Astrocyte of the cerebellum (primary cell): ENCODE measurements at regions of chr11 and their contacts with region 1.

Region 1: GRCh38 chr11:2666401-2666741 is 33.4 kb downstream of the KCNQ1OT1 start:
- DNase-seq: no peak
- H3K4me3 ChIP-seq: no peak overlapping the region
- CTCF ChIP-seq: no peak

Region 2: DNA sequence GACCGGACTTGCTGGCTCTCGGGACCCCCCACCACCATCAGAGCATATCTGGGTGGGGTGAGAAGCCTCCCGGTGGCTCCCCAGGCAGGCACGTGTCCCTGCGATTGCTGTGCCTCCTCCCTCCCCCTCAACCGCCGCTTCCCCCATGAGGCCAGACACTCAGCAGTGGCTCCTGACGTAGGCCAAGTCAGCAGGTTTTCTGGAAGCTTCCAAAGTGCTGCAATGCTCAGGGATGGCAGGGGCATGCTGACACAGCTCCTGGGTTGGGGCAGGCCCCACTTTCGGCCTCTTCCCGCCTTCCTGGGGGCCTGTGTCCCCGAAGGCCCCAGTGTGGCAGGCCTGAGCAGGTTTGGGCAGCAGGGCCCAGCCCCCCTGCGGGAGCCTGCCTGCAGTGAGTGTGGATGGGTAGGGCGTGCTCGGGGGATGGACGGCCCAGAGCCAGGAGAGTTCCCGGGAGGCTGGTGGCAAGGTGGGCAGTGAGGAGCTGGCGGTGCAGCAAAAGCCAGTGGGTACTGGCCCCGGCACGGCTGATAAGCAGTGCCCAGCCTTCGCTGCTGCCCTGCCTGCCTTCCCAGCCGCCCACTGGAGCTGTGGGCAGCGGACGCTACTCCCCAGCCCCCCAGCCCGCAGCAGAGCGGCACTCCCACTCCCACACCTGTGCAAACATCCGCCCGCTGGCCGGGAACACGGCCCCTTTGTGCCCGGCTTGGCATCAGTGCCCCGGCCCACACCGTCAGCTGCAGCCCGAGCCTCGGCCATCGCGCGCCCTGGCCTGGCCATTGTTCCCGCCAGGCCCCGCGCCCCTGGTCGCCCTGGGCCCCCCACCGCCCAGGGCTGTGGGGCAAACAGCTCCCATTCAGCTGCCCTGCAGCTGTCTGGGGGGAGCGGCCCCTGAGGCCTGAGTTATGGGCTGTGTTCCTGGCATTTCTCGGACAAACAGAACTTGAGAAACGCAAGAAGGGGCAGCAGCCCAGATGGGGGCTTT is 91.5 kb before region 1 on chr11:
- in situ Hi-C with region 1: loop called (anchors 5 kb)
- DNase-seq: no peak
- H3K4me3 ChIP-seq: no peak overlapping the region
- CTCF ChIP-seq: no peak

Region 3: DNA sequence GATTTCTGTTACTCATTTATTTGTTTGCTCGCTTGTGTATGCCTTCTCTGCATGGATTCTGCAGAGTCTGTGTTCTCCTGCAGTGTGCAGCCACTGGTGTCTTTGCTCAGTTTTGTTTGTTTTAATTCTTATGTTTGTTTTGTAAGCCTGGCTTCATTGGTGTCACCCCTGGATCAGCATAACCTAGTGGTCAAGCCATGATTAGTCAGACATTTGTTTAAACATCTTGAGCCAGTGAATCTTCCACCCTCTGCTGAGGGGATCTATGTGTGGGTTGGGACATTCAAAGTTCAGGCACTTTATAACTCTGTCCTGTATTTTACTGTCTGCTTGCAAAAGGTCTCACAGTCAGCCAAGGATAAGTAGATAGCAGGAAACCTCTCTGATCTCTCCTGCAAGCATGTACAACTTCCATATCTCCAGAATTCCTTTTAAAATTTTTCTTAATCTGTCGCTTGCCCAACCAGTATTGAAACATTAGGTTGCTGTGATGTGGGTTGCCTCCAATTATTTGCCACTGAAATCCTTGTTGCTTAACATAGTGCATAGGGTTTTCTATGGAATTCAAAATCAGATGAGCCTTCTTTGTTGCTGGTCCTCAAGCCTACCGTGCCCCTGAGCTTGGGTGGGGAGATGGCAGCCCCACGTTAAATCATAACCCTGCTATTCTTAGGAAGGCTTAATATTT is 53.3 kb before region 1 on chr11:
- in situ Hi-C with region 1: no loop called
- DNase-seq: no peak
- H3K4me3 ChIP-seq: no peak overlapping the region
- CTCF ChIP-seq: no peak

Region 4: DNA sequence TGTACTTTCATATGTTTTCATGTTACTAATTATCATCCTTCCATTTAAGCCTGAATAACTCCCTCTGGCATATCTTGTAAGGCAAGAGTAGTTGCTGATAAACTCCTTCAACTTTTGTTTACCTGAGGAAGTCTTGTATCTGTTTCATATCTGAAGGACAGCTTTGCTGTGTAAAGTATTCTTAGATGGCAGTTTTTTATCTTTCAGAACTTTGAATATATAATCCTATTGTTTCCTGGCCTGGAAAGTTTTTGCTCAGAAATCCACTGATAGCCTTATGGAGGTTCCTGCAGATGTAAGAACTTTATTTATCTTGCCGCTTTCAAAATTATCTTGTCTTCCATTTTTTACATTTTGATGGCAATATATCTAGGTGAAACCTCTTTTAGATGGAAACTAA is 35.7 kb before region 1 on chr11:
- in situ Hi-C with region 1: no loop called
- DNase-seq: no peak
- H3K4me3 ChIP-seq: no peak overlapping the region
- CTCF ChIP-seq: no peak